Caco-2 (cell line): ENCODE measurements at regions of chr6 and their contacts with region 1.

Region 1: DNA sequence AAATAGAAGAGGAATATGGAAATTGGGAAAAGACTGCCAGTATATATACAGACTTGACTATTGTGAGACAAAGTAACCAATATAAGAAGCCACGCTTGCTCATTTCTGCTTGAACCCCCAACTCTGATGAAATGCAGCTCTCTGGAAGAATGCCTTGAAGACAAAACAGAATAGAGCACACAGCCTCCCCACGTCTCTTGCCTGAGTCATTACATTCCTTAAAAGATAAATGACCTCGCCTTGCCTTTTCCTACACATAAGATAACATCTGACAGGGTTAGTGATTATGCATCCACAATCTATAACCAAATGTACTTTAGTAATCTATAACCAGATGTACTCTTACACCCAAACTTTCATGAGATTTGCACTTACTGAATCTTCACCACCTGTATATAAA is 141.1 kb upstream of the EEF1E1 start:
- DNase-seq: peak; percentile 55 to 60
- H3K4me3 ChIP-seq: no peak overlapping the region
- H3K4me3 Mint-ChIP-seq: peak overlapping the region; percentile 40
- H3K27ac Mint-ChIP-seq: peak overlapping the region; percentile 89
- H3K4me1 ChIP-seq: peaks cover 58% of the 10 kb centered on the region
- H3K4me1 Mint-ChIP-seq: peaks cover 50% of the 10 kb centered on the region
- H3K27me3 ChIP-seq: no peaks in the 10 kb centered on the region
- H3K27me3 Mint-ChIP-seq: no peaks in the 10 kb centered on the region
- CTCF ChIP-seq: no peak

Region 2: DNA sequence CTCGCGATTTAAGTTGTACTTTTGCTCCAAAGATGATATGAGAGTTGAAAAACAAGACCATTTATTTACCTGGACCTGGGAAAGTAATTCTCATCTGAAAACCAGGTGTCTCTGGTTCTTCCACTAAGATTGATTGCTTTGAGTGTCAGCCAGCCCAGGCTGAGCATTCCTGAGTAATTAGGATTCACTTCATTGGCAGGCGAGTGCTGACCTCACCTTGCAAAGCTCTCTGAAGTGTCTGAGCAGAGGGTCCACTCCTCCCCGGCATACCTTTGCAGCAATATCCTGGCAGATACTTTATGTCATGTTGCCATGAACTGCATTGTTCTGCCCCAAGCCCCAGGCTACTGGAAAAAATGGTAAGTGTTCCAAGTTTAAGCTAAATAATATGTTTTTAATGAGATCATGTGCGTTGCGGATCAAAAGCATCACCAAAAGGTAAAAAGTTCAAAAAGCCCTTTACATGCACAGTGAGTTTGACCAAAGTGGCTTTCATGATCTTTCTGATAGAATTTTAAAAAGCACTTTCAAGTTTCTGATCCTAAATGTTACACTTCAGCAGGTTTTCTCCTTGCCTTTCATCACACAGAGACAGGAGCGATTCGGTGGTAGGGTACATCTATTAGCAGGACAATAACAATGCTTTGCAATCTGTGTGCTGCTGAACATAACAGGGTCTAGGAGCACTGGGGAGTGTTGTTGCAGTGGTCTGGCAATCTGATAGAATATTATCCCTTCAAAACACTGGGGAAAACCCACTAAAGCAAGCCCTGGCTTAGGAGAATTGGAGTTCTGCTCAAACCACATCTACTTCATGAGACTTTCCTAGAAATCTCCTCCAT is 13.3 kb before region 1 on chr6:
- CTCF ChIA-PET with region 1: interaction called, 6 read pairs
- POLR2A ChIA-PET with region 1: interaction called, 5 read pairs
- intact Hi-C with region 1: loop called (anchors 1 kb)
- DNase-seq: peak; percentile 79 to 89
- H3K4me3 ChIP-seq: no peak overlapping the region
- H3K4me3 Mint-ChIP-seq: peak overlapping the region; percentile 61
- H3K27ac Mint-ChIP-seq: peak overlapping the region; percentile 83
- H3K4me1 ChIP-seq: peaks cover 54% of the 10 kb centered on the region
- H3K4me1 Mint-ChIP-seq: peaks cover 31% of the 10 kb centered on the region
- H3K27me3 ChIP-seq: no peaks in the 10 kb centered on the region
- H3K27me3 Mint-ChIP-seq: no peaks in the 10 kb centered on the region
- CTCF ChIP-seq: no peak

Region 3: DNA sequence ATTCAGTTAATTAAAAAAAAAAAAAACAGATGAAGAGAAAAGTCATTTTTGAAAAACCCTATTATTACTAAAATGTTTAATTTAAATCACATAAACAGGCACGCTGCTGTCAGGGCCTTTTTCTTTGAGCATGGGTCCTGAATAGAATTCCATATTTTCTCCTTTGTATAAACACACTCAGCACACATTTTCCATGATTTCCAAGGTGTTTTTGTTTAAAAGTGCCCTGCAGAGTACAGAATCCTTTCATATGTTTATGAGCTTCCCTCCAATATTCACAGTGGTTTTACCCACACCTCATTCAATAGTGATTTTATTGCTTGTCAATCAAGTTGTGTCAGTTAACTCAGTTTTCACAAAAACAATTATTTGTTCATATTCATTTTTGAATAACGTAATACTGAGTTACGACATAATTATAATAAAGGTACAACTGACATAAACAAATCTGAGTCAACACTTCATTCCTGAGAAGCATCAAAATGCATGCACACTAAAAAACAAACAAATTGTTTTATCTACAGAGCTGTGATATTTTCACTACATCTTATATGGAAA is 176.6 kb after region 1 on chr6:
- CTCF ChIA-PET with region 1: no interaction called
- POLR2A ChIA-PET with region 1: interaction called, 14 read pairs
- intact Hi-C with region 1: no loop called
- DNase-seq: no peak
- H3K4me3 ChIP-seq: no peak overlapping the region
- H3K4me3 Mint-ChIP-seq: no peak overlapping the region
- H3K27ac Mint-ChIP-seq: no peak overlapping the region
- H3K4me1 ChIP-seq: peaks cover 17% of the 10 kb centered on the region
- H3K4me1 Mint-ChIP-seq: peaks cover 13% of the 10 kb centered on the region
- H3K27me3 ChIP-seq: no peaks in the 10 kb centered on the region
- H3K27me3 Mint-ChIP-seq: no peaks in the 10 kb centered on the region
- CTCF ChIP-seq: no peak